Activated CD4-positive, alpha-beta memory T cell treated with anti-CD3 and anti-CD28 coated beads for 36 hours (primary cell): ENCODE measurements at regions of chr2 and their contacts with region 1.

Region 1: GRCh38 chr2:241315093-241315878 is at the start of gene HDLBP:
- DNase-seq: peak; percentile 100
- H3K4me3 Mint-ChIP-seq: peak within 1 kb of the TSS; percentile 98
- H3K27ac Mint-ChIP-seq: peak within 1 kb of the TSS; percentile 100
- H3K4me1 Mint-ChIP-seq: peaks cover 67% of the 10 kb centered on the region
- H3K27me3 Mint-ChIP-seq: no peaks in the 10 kb centered on the region
- total RNA-seq, gene HDLBP: 243 to 251 TPM

Region 2: DNA sequence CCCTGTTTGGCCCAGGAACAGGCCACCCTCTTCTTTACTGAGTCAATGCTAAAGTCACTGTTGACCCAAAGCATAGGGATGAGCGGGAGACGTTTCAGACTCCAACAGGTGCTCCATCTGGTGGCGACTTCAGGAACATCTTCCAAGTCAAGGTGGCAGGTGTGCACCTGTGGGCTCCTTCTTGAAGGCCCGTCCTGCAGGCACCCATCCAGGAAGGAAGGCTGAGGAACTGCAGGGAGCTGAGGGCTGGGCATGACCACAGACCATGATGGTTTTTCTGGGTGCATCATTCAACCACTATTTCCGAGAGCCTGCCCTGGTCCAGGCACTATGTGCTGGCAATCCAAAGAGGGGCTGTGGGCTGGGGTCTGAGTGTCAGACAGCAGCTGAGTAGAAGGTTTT is 1433.0 kb before region 1 on chr2:
- CTCF ChIA-PET with region 1: no interaction called
- POLR2A ChIA-PET with region 1: no interaction called
- intact Hi-C with region 1: no loop called
- DNase-seq: peak; percentile 66
- H3K4me3 Mint-ChIP-seq: no peak overlapping the region
- H3K27ac Mint-ChIP-seq: no peak overlapping the region
- H3K4me1 Mint-ChIP-seq: peaks cover 3% of the 10 kb centered on the region
- H3K27me3 Mint-ChIP-seq: peaks cover 2% of the 10 kb centered on the region

Region 3: DNA sequence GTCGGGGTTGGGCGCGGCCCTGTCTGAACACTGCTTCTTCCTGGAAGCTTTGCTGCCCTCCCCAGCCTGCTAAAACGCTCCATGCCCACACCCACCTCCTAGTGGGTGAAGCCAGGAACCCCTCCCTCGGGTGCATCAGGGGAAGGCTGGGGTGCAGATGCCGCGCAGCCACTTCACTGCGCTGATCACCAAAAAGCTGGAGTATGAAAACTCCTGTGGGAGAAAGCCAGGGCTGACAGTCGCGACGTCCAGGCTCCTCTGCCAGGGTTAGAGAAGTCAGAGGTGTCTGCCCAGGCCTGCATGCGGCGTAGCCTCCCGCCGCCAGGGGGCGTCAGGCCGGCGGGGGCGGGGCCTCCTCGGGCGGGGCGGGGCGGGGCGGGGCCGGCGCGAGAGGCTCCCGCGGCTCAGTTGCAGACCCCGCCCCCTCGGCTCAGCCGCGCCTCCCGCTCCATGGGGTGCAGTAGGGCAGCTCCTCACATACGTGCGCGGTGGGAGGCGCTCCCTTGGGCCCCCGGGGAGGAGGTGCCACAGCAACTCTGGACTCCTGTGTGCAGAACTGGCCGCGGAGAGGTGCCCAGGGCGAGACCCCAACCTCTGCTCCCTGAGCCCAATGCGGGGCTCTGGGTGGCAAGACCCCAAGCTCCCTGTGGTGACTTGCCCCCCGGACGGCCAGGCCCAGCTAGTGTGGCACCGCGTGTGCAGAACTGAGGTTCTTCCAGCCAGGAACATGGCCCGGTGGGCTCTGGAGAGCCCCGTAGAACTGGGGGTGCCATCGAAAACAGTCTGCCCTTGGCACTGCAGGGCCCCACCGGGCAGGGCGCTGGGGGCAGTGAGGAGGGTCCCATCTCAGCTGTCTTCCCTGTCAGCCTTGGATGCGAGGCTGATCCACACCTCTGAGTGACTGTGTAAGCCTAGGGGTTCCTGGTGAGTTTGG is 748.8 kb before region 1 on chr2:
- CTCF ChIA-PET with region 1: interaction called, 3 read pairs
- POLR2A ChIA-PET with region 1: interaction called, 3 read pairs
- intact Hi-C with region 1: loop called (anchors 1 kb)
- DNase-seq: peak; percentile 96
- H3K4me3 Mint-ChIP-seq: peak overlapping the region; percentile 93
- H3K27ac Mint-ChIP-seq: peak overlapping the region; percentile 98
- H3K4me1 Mint-ChIP-seq: peaks cover 64% of the 10 kb centered on the region
- H3K27me3 Mint-ChIP-seq: no peaks in the 10 kb centered on the region

Region 4: GRCh38 chr2:241149925-241150659 is 165.2 kb before region 1 on chr2 and contains the start of gene PPP1R7:
- CTCF ChIA-PET with region 1: no interaction called
- POLR2A ChIA-PET with region 1: interaction called, 4 read pairs
- intact Hi-C with region 1: loop called (anchors 1 kb)
- DNase-seq: peak; percentile 98
- H3K4me3 Mint-ChIP-seq: peak within 1 kb of the TSS; percentile 93
- H3K27ac Mint-ChIP-seq: peak within 1 kb of the TSS; percentile 86
- H3K4me1 Mint-ChIP-seq: peaks cover 56% of the 10 kb centered on the region
- H3K27me3 Mint-ChIP-seq: no peaks in the 10 kb centered on the region
- total RNA-seq, gene PPP1R7: 123 to 132 TPM

Region 5: DNA sequence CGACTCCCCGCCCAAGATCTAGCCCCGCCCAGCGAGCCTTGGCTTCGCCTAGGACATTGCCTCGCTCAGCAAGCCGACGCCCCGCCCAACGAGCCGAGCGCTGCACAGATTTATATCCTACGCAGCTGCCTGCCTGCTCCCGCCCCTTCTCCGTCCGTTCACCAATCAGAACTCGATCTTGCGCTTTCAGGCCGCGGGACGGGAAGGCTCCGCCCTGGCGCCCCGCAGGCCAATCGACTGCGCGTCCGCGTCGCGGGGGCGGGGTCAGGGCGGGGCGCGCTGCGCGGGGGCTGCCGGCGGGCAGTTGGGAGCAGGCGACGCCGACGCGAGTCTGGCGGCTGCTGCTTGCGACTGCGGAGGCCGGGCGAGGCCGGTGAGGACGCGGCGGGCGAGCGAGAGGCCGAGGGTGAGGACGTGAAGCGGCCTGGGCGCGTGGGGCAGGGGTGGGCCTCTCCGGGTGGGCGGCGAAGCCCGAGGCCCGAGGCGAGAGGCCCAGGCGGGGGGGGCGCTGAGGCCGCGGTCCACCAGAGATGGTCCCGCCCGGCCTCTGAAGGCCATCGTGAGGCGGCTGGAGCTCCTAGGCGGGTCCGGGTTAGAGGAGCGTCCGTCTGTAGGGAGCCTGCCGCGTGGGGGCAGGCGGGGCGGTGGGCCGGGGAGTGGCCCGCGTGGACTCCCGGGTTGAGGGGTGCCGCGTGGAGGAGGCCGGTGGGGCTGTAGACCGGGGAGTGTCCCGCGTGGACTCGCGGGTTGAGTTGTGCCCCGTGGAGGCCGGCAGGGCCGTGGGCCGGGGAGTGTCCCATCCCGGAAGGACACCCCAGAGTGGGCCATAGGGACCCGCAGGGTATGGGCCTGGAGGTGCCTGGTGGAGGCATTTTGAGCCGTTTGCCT is 40.9 kb after region 1 on chr2 and contains the start of gene FARP2:
- CTCF ChIA-PET with region 1: no interaction called
- POLR2A ChIA-PET with region 1: no interaction called
- intact Hi-C with region 1: loop called (anchors 1 kb)
- DNase-seq: peak; percentile 98
- H3K4me3 Mint-ChIP-seq: peak within 1 kb of the TSS; percentile 75
- H3K27ac Mint-ChIP-seq: peak within 1 kb of the TSS; percentile 79
- H3K4me1 Mint-ChIP-seq: peaks cover 35% of the 10 kb centered on the region
- H3K27me3 Mint-ChIP-seq: no peaks in the 10 kb centered on the region
- total RNA-seq, gene FARP2: 25.1 to 29.5 TPM

Region 6: GRCh38 chr2:241637000-241637791 is 321.9 kb after region 1 on chr2 and contains the starts of genes ATG4B and THAP4:
- CTCF ChIA-PET with region 1: no interaction called
- POLR2A ChIA-PET with region 1: no interaction called
- intact Hi-C with region 1: loop called (anchors 5 kb)
- DNase-seq: peak; percentile 84
- H3K4me3 Mint-ChIP-seq: peak within 1 kb of the TSS; percentile 91
- H3K27ac Mint-ChIP-seq: peak within 1 kb of the TSS; percentile 84
- H3K4me1 Mint-ChIP-seq: peaks cover 54% of the 10 kb centered on the region
- H3K27me3 Mint-ChIP-seq: no peaks in the 10 kb centered on the region
- total RNA-seq, gene ATG4B: 85.0 to 85.9 TPM
- total RNA-seq, gene THAP4: 43.7 to 44.5 TPM

Region 7: DNA sequence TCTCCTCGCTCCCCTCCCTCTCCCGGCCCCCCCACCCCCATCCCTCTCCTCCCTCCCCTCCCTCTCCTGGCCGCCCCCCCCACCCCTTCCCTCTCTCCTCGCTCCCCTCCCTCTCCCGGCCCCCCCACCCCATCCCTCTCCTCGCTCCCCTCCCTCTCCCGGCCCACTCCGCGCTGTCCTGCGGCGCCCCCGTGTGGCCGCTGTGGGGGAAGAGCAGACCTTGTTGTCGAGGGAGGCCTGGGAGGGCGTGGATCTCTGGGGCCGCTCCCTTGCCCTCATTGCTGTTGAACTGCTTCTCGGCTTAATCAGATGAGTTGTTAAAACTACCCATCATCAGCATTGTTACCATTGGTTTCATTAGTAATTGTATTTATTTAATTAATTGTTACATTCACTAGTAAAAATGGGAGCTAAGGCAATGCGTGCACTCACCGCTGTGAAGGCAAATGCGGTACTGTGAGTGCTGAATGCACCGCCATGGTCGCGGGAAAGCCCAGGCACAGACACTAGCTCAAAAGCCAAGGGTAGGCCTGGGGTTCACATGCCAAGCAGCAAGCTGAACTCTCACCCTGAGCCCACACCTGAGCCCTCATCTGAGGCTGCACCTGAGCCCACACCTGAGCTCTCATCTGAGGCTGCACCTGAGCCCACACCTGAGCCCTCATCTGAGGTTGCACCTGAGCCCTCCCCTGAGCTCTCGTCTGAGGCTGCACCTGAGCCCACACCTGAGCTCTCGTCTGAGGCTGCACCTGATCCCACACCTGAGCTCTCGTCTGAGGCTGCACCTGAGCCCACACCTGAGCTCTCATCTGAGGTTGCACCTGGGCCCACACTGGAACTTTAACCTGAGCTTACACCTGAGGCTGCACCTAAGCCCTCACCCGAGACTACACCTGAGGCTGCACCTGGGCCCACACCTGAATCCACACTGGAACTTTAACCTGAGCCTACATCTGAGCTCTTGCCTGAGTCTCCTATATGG is 563.0 kb after region 1 on chr2:
- CTCF ChIA-PET with region 1: no interaction called
- POLR2A ChIA-PET with region 1: no interaction called
- intact Hi-C with region 1: loop called (anchors 1 kb)
- DNase-seq: peak; percentile 82
- H3K4me3 Mint-ChIP-seq: no peak overlapping the region
- H3K27ac Mint-ChIP-seq: no peak overlapping the region
- H3K4me1 Mint-ChIP-seq: peaks cover 28% of the 10 kb centered on the region
- H3K27me3 Mint-ChIP-seq: no peaks in the 10 kb centered on the region